ENCODE measurements at regions of chr1 and their contacts with region 1.

Region 1: DNA sequence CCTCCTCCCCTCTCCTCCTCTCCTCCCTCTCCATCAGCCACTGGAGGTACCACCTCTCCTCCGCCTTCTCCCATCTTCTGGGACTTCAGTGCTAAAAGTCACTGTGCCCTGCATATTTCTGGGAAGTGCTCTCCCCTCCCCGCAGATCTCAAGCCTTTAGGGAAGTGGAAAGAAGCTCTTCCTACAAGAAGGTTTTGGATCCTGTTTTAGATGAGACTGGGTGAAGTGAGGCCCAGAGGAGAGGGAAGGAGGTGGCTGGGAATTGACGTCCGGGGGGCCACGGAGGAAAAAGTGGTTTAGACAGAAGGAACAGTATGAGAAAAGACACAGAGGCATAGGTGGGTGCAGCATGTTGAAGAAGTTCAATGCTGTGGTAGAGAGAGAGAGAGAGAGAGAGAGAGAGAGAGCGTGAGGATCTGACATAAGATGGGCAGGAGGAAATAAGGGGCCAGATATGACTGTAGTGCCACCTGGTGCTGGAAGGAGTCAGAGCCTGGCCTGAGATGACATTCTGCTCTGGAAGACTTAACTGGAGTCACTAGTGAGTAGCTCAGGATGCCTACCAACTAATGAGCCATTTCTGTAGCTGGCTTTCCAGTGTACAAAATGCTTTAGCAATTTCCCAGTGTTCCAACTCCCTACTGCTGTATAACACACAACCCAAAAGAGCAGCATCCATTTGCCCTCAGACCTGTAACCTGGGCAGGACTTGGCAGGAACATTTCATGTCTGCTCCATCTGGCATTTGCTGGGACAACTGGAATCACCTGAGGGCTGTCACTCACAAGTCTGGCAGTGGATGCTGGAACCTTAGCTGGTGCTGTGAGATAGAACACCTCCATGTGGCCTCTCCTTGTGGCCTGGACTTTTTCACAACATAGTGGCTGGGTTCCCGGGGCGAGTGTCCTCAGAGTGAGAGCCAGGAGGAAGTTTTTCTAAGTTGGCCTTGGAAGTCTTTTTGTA is 16.6 kb upstream of the ZSCAN20 start:
- DNase-seq: peak in 1 of 2 donors; percentile 78
- H3K4me3 ChIP-seq: no peak overlapping the region
- H3K27ac ChIP-seq: peak overlapping the region; percentile 22 to 69
- H3K4me1 ChIP-seq: peaks cover 6 to 36% of the 10 kb centered on the region in 2 donors
- H3K27me3 ChIP-seq: no peaks in the 10 kb centered on the region
- CTCF ChIP-seq: peak; percentile 40 to 64 (median 61)

Region 2: DNA sequence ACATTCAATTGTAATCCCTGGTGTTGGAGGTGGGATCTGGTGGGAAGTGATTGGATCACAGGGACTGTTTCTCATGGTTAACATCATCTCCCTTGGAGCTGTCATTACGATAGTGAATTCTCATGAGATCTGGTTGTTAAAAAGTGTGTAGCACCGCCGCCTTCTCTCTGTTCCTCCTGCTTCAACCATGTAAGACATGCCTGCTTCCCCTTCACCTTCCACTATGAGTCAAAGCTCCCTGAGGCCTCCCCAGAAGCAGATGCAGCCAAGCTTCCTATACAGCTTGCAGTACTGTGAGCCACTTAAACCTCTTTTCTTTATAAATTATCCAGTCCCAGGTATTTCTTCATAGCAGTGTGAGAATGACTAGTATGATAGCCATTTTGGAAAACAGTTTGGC is 243.8 kb before region 1 on chr1:
- intact Hi-C with region 1: loop called (anchors 5 kb)
- DNase-seq: no peak
- H3K4me3 ChIP-seq: no peak overlapping the region
- H3K27ac ChIP-seq: no peak overlapping the region
- H3K4me1 ChIP-seq: no peaks in the 10 kb centered on the region
- H3K27me3 ChIP-seq: no peaks in the 10 kb centered on the region
- CTCF ChIP-seq: no peak